Activated CD4-positive, alpha-beta T cell treated with anti-CD3 and anti-CD28 coated beads, Interleukin-2, amount 10 ng/mL, durations not matched to agents 24 days and 14 days (primary cell): ENCODE measurements at regions of chr6 and their contacts with region 1.

Region 1: DNA sequence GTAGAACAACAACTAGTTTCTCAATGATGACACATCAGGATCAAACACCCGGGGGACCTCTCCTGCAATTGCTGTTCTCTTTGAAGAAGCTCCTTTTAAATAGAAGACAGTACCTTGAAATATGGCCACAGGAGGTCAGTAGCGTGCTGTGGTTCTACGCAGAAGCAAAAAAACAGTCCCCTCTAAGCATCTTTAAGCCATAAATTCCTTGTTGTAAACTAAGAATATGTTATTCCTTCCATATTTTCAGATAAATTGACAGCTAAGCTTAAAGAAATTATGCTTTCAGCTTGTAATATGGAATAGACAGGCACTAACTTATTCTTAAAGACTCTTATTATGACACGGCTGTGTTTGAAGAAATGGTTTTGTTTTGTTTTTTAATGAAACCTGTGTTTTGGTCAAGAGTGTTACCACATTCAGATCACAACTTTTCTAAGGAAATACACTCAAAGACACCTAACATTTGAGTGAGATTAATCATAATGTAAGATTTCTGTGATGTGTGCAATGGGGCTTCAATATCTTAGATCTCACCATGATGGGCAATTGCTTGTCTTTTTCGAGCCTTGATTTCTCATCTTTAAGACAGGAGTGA is 49.7 kb upstream of the IL20RA start:
- DNase-seq: peak; percentile 87
- H3K4me3 Mint-ChIP-seq: no peak overlapping the region
- H3K27ac Mint-ChIP-seq: peak overlapping the region; percentile 47
- H3K4me1 Mint-ChIP-seq: peaks cover 32% of the 10 kb centered on the region
- H3K27me3 Mint-ChIP-seq: no peaks in the 10 kb centered on the region

Region 2: DNA sequence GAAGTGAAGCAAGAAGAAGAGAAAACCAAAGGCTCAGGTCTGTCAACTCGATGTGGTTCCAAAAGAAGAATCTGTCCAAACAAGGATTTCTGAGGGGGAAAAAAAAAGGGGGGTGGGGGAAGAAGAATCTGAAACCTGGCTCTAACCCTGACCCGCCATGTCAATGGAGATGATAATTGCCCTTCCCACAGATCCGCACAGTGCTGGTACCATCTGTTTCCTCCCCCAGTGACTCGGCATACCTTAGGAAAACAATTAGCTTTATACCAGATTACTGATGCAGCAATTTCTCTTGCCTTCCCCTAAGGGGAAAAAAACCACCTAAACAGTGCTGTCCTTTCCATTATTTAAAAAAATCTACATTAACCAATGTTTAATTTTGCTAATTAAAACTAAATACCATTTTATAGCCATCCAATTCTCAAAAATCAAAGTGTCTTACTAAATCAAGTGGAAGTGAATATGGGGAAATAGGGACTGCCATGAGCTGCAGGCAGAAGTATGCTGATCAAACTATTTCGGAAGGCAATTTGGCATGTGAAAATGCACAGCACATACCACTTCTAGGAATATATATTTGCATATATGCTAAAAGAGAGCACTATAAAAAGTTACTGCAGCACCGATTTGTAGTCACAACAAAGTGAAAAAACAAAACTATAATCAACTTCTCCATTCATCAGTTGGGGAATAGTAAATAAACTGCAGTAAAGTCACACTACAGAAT is 591.0 kb before region 1 on chr6:
- intact Hi-C with region 1: no loop called
- DNase-seq: no peak
- H3K4me3 Mint-ChIP-seq: no peak overlapping the region
- H3K27ac Mint-ChIP-seq: no peak overlapping the region
- H3K4me1 Mint-ChIP-seq: no peaks in the 10 kb centered on the region
- H3K27me3 Mint-ChIP-seq: peaks cover 11% of the 10 kb centered on the region

Region 3: GRCh38 chr6:137076277-137077068 is 18.0 kb before region 1 on chr6:
- intact Hi-C with region 1: loop called (anchors 1 kb)
- DNase-seq: peak; percentile 87
- H3K4me3 Mint-ChIP-seq: no peak overlapping the region
- H3K27ac Mint-ChIP-seq: no peak overlapping the region
- H3K4me1 Mint-ChIP-seq: no peaks in the 10 kb centered on the region
- H3K27me3 Mint-ChIP-seq: peaks cover 48% of the 10 kb centered on the region

Region 4: GRCh38 chr6:137112067-137112355 is 17.5 kb after region 1 on chr6:
- intact Hi-C with region 1: no loop called
- DNase-seq: no peak
- H3K4me3 Mint-ChIP-seq: no peak overlapping the region
- H3K27ac Mint-ChIP-seq: no peak overlapping the region
- H3K4me1 Mint-ChIP-seq: no peaks in the 10 kb centered on the region
- H3K27me3 Mint-ChIP-seq: peaks cover 20% of the 10 kb centered on the region

Region 5: DNA sequence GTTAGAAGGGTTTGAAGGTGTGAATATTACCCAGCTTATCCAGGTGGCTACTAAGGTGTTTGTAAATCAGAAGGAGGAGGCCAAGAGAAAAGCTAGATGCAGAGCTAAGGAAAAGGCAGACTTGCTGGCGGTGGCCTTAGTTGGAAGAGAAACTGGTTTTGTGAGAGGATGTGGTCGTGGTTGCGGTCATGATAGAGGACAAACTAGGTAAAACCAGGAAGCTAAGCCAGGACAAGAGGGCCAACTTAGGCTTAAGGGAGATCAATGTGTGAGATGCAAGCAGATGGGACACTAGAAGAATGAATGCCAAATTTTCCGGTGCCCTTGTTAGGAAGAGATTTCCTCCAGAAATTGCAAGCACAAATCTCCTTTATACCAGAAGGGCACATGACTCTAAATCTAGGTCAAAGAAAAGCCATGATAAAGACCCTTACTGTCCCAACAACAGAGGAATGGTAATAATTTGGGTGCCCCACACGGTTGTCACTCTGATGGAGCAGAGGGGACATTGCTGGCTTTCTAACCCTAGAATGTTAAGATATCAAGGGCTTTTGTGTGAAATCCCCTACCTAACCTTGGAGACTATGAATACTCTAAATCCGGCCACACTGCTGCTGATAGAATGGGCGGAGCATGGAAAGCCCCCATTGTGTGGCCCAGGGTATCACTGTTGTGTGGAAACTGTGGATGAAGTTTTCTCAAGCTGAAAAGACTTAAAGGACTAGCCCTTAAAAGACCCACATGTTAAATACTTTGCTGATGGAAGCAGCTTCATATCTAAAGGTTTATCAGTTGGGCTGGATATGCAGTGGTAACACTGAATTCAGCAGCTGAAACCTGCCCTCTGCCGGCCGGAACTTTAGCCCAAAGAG is 71.1 kb after region 1 on chr6:
- intact Hi-C with region 1: loop called (anchors 2 kb)
- DNase-seq: peak; percentile 88
- H3K4me3 Mint-ChIP-seq: peak overlapping the region; percentile 7
- H3K27ac Mint-ChIP-seq: peak overlapping the region; percentile 41
- H3K4me1 Mint-ChIP-seq: peaks cover 34% of the 10 kb centered on the region
- H3K27me3 Mint-ChIP-seq: no peaks in the 10 kb centered on the region

Region 6: GRCh38 chr6:137233911-137234863 is 139.7 kb after region 1 on chr6:
- intact Hi-C with region 1: loop called (anchors 2 kb)
- DNase-seq: peak; percentile 72
- H3K4me3 Mint-ChIP-seq: peak overlapping the region; percentile 11
- H3K27ac Mint-ChIP-seq: peak overlapping the region; percentile 55
- H3K4me1 Mint-ChIP-seq: peaks cover 46% of the 10 kb centered on the region
- H3K27me3 Mint-ChIP-seq: peaks cover 14% of the 10 kb centered on the region

Region 7: DNA sequence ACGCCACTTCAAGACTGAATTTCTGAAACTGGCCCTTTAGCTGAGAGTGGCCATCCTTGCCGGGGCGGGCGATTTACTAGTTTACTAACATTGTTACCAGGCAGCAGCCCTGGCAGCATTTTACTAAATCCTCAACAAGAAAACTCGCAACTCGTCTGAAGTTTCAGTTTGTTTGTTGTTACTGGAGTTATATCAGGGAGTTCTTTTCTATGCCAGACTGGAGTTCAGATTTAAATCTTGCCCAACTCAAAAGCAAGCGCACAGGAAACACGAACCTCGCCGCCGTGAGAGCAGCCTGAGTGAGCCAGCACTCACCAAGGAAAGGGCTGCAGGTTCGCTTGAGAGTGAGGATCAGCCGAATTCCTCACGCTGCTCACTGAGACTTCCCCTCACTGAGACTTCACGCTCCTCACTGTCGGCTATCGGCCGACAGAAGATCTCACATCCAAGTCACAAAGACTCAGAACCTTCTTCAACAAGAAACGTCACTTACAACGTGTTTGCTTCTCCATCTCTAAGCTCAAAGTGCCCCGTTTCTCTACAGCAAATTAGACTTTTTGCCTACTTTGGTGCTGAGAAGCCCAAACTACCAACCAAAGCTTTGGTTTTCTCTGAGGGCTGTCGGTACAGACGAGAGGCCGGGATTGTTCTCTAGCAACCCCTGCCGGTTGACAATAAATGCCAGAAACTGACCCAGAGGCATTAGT is 320.8 kb after region 1 on chr6:
- intact Hi-C with region 1: loop called (anchors 1 kb)
- DNase-seq: peak; percentile 90
- H3K4me3 Mint-ChIP-seq: peak overlapping the region; percentile 79
- H3K27ac Mint-ChIP-seq: peak overlapping the region; percentile 38
- H3K4me1 Mint-ChIP-seq: peaks cover 9% of the 10 kb centered on the region
- H3K27me3 Mint-ChIP-seq: peaks cover 24% of the 10 kb centered on the region

Region 8: GRCh38 chr6:138109042-138109997 is 1014.8 kb after region 1 on chr6:
- intact Hi-C with region 1: loop called (anchors 10 kb)
- DNase-seq: peak; percentile 93
- H3K4me3 Mint-ChIP-seq: no peak overlapping the region
- H3K27ac Mint-ChIP-seq: no peak overlapping the region
- H3K4me1 Mint-ChIP-seq: peaks cover 22% of the 10 kb centered on the region
- H3K27me3 Mint-ChIP-seq: peaks cover 45% of the 10 kb centered on the region